CD14-positive monocyte (primary cell): ENCODE measurements at regions of chr17 and their contacts with region 1.

Region 1: GRCh38 chr17:31842183-31843069 is 16.6 kb downstream of the COPRS start:
- DNase-seq: peak; percentile 50 to 72 (median 70)
- H3K4me3 ChIP-seq: peak overlapping the region in 2 of 3 experiments; percentile 2 to 60
- H3K4me3 Mint-ChIP-seq: no peak overlapping the region
- H3K27ac ChIP-seq: no peak overlapping the region
- H3K27ac Mint-ChIP-seq: no peak overlapping the region
- H3K4me1 ChIP-seq: peaks cover 15% of the 10 kb centered on the region in 2 donors
- H3K4me1 Mint-ChIP-seq: peaks cover 14% of the 10 kb centered on the region
- H3K27me3 ChIP-seq: no peaks in the 10 kb centered on the region
- H3K27me3 Mint-ChIP-seq: peaks cover 0 to 3% (median 0%) of the 10 kb centered on the region in 3 donors
- CTCF ChIP-seq: peak; percentile 94

Region 2: GRCh38 chr17:31437720-31438420 is 404.6 kb before region 1 on chr17:
- intact Hi-C with region 1: loop called (anchors 5 kb)
- DNase-seq: no peak
- H3K4me3 ChIP-seq: no peak overlapping the region
- H3K4me3 Mint-ChIP-seq: no peak overlapping the region
- H3K27ac ChIP-seq: no peak overlapping the region
- H3K27ac Mint-ChIP-seq: no peak overlapping the region
- H3K4me1 ChIP-seq: no peaks in the 10 kb centered on the region
- H3K4me1 Mint-ChIP-seq: peaks cover 7% of the 10 kb centered on the region
- H3K27me3 ChIP-seq: no peaks in the 10 kb centered on the region
- H3K27me3 Mint-ChIP-seq: peaks cover 18 to 38% (median 18%) of the 10 kb centered on the region in 3 donors
- CTCF ChIP-seq: no peak

Region 3: GRCh38 chr17:31524926-31525800 is 317.3 kb before region 1 on chr17:
- intact Hi-C with region 1: loop called in 1 of 2 experiments (anchors 2 kb)
- DNase-seq: peak; percentile 68 to 76 (median 75)
- H3K4me3 ChIP-seq: no peak overlapping the region
- H3K4me3 Mint-ChIP-seq: no peak overlapping the region
- H3K27ac ChIP-seq: no peak overlapping the region
- H3K27ac Mint-ChIP-seq: peak overlapping the region in 2 of 7 donors; percentile 56 to 63
- H3K4me1 ChIP-seq: no peaks in the 10 kb centered on the region
- H3K4me1 Mint-ChIP-seq: peaks cover 3% of the 10 kb centered on the region
- H3K27me3 ChIP-seq: no peaks in the 10 kb centered on the region
- H3K27me3 Mint-ChIP-seq: peaks cover 1 to 3% (median 1%) of the 10 kb centered on the region in 3 donors
- CTCF ChIP-seq: peak; percentile 97

Region 4: GRCh38 chr17:31541559-31541958 is 300.9 kb before region 1 on chr17:
- intact Hi-C with region 1: loop called in 1 of 2 experiments (anchors 5 kb)
- DNase-seq: no peak
- H3K4me3 ChIP-seq: no peak overlapping the region
- H3K4me3 Mint-ChIP-seq: no peak overlapping the region
- H3K27ac ChIP-seq: no peak overlapping the region
- H3K27ac Mint-ChIP-seq: no peak overlapping the region
- H3K4me1 ChIP-seq: no peaks in the 10 kb centered on the region
- H3K4me1 Mint-ChIP-seq: peaks cover 3% of the 10 kb centered on the region
- H3K27me3 ChIP-seq: no peaks in the 10 kb centered on the region
- H3K27me3 Mint-ChIP-seq: peaks cover 0 to 8% (median 0%) of the 10 kb centered on the region in 3 donors
- CTCF ChIP-seq: peak; percentile 19

Region 5: DNA sequence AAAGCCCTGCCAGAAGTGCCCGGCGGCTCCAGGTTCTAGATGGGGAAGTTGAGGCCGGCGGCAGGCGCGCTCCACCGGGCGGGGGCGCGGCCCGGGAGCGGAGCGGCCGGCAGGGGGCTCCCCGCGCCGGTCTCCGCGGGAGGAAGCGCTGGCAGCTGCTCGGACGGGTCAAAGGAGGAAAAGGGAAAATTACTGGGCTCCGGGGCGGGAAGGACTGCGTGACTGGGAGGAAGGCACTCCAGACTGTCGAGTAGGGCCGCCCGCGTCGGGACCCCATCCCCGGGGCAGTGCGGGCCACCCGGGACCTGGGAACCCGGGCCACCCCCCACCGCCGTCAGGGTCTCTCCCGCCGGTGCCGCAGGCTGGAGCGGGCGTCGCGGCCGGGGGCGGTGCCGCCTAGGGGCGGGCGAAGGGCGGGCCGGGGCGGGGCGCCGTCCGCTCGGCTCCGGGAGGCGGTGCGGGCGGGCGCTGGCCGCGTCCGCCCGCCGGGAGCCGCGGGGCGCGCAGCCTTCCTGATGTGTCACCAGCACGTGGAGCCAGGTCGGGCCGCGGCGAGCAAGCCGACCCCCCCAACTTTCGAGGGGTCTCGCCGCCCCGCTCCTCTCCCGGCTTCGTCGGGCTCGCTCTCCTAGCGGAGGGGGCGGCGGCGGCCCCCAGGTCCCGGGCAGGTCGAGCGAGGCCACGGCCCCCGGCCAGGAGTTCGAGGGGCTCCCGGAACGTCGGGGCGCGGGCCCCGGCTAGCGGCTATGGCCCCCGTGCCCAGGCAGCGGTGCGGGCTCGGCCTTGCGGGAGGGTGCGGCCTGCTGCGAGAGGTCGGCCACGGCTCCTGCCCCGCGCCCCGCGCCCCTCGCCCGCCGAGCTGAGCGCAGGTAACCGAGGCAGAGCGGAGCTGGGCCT is 283.4 kb before region 1 on chr17:
- intact Hi-C with region 1: loop called in 1 of 2 experiments (anchors 5 kb)
- DNase-seq: peak; percentile 67 to 87 (median 78)
- H3K4me3 ChIP-seq: peak overlapping the region; percentile 44 to 74 (median 62)
- H3K4me3 Mint-ChIP-seq: peak overlapping the region; percentile 66 to 80
- H3K27ac ChIP-seq: peak overlapping the region; percentile 56 to 78
- H3K27ac Mint-ChIP-seq: peak overlapping the region in 6 of 7 donors; percentile 48 to 80 (median 65)
- H3K4me1 ChIP-seq: peaks cover 38 to 46% of the 10 kb centered on the region in 2 donors
- H3K4me1 Mint-ChIP-seq: peaks cover 37% of the 10 kb centered on the region
- H3K27me3 ChIP-seq: no peaks in the 10 kb centered on the region
- H3K27me3 Mint-ChIP-seq: peaks cover 5 to 11% (median 6%) of the 10 kb centered on the region in 3 donors
- CTCF ChIP-seq: peak; percentile 88

Region 6: DNA sequence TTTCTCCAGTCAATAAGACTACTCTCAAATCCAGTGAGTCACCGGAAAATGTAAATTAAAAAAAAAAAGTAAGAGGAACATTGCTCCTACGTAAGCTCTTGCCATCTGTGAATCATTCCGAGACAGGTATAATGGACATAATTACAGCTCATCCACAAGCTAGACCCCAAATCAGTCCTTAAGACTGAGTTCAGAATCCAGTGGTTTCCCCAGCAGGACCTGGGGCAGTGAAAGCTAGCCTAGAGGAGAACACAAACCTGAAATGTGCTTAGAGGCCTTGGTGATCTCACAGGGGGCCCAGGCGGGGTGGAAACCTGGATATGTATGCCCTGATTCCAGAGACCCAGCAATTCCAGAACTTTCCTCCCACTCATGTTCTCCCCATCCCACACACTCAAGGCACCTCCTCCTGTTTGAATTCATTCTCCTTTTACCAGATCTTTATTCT is 115.4 kb before region 1 on chr17:
- intact Hi-C with region 1: no loop called
- DNase-seq: no peak
- H3K4me3 ChIP-seq: no peak overlapping the region
- H3K4me3 Mint-ChIP-seq: no peak overlapping the region
- H3K27ac ChIP-seq: no peak overlapping the region
- H3K27ac Mint-ChIP-seq: no peak overlapping the region
- H3K4me1 ChIP-seq: no peaks in the 10 kb centered on the region
- H3K4me1 Mint-ChIP-seq: peaks cover 6% of the 10 kb centered on the region
- H3K27me3 ChIP-seq: no peaks in the 10 kb centered on the region
- H3K27me3 Mint-ChIP-seq: peaks cover 4 to 5% (median 4%) of the 10 kb centered on the region in 3 donors
- CTCF ChIP-seq: no peak

Region 7: GRCh38 chr17:31740611-31741082 is 101.8 kb before region 1 on chr17:
- intact Hi-C with region 1: no loop called
- DNase-seq: no peak
- H3K4me3 ChIP-seq: no peak overlapping the region
- H3K4me3 Mint-ChIP-seq: no peak overlapping the region
- H3K27ac ChIP-seq: no peak overlapping the region
- H3K27ac Mint-ChIP-seq: peak overlapping the region in 2 of 7 donors; percentile 5 to 43
- H3K4me1 ChIP-seq: no peaks in the 10 kb centered on the region
- H3K4me1 Mint-ChIP-seq: no peaks in the 10 kb centered on the region
- H3K27me3 ChIP-seq: no peaks in the 10 kb centered on the region
- H3K27me3 Mint-ChIP-seq: peaks cover 2 to 9% (median 4%) of the 10 kb centered on the region in 3 donors
- CTCF ChIP-seq: no peak